ENCODE measurements at regions of chr20 and their contacts with region 1.

Region 1: GRCh38 chr20:35901678-35902544 is 52.4 kb downstream of the SCAND1 start:
- DNase-seq: no peak
- ATAC-seq: no peak
- H3K4me3 ChIP-seq: no peak overlapping the region
- H3K4me3 Mint-ChIP-seq: no peak overlapping the region
- H3K27ac ChIP-seq: no peak overlapping the region
- H3K27ac Mint-ChIP-seq: no peak overlapping the region
- H3K4me1 ChIP-seq: peaks cover 0 to 2% of the 10 kb centered on the region in 2 experiments
- H3K4me1 Mint-ChIP-seq: peaks cover 14 to 28% (median 15%) of the 10 kb centered on the region in 3 donors
- H3K27me3 ChIP-seq: no peaks in the 10 kb centered on the region
- H3K27me3 Mint-ChIP-seq: no peaks in the 10 kb centered on the region

Region 2: GRCh38 chr20:35511814-35512420 is 390.0 kb before region 1 on chr20:
- CTCF ChIA-PET with region 1: interaction called in 1 of 2 experiments, 14 read pairs
- POLR2A ChIA-PET with region 1: no interaction called
- DNase-seq: no peak
- ATAC-seq: no peak
- H3K4me3 ChIP-seq: no peak overlapping the region
- H3K4me3 Mint-ChIP-seq: no peak overlapping the region
- H3K27ac ChIP-seq: no peak overlapping the region
- H3K27ac Mint-ChIP-seq: peak overlapping the region; percentile 19 to 24
- H3K4me1 ChIP-seq: no peaks in the 10 kb centered on the region
- H3K4me1 Mint-ChIP-seq: peaks cover 3 to 5% (median 4%) of the 10 kb centered on the region in 3 donors
- H3K27me3 ChIP-seq: no peaks in the 10 kb centered on the region
- H3K27me3 Mint-ChIP-seq: no peaks in the 10 kb centered on the region

Region 3: GRCh38 chr20:35856866-35857265 is 45.0 kb before region 1 on chr20:
- CTCF ChIA-PET with region 1: no interaction called
- POLR2A ChIA-PET with region 1: no interaction called
- DNase-seq: no peak
- ATAC-seq: no peak
- H3K4me3 ChIP-seq: no peak overlapping the region
- H3K4me3 Mint-ChIP-seq: no peak overlapping the region
- H3K27ac ChIP-seq: no peak overlapping the region
- H3K27ac Mint-ChIP-seq: no peak overlapping the region
- H3K4me1 ChIP-seq: no peaks in the 10 kb centered on the region
- H3K4me1 Mint-ChIP-seq: peaks cover 23 to 32% (median 28%) of the 10 kb centered on the region in 3 donors
- H3K27me3 ChIP-seq: no peaks in the 10 kb centered on the region
- H3K27me3 Mint-ChIP-seq: no peaks in the 10 kb centered on the region

Measured in T-cell (primary cell).